Lower leg skin (tissue), 4 donors: ENCODE measurements at regions of chr7 and their contacts with region 1.

Region 1: GRCh38 chr7:24991353-24991752 is 11.4 kb upstream of the OSBPL3 start:
- DNase-seq: no peak
- H3K4me3 ChIP-seq: no peak overlapping the region
- CTCF ChIP-seq: no peak
- POLR2A ChIP-seq: no peak

Region 2: GRCh38 chr7:25054819-25055519 is 63.6 kb after region 1 on chr7:
- intact Hi-C with region 1: loop called (anchors 10 kb)
- DNase-seq: no peak
- H3K4me3 ChIP-seq: no peak overlapping the region
- CTCF ChIP-seq: no peak
- POLR2A ChIP-seq: no peak